ENCODE measurements at regions of chr4 and their contacts with region 1.

Region 1: DNA sequence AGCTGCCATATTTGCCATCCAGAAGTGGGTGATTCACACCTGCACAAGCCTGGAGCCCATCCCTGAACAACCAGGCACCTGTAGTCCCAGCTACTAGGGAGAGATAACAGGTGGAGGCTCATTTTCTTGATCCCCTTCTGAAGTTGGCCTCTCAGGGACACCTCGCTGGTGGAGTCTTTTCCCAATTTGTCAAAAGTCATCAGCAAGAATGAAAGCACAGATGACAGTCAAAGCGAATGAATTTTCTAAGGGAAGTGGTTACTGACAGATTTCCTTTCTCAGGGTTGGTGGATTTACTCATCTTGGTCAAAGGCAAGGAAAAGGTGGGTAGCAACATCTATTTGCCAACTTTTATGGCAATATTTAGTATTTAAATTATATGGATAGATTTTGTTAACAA is 36.5 kb downstream of the FGFBP1 start:
- DNase-seq: peak; percentile 30
- ATAC-seq: peak; percentile 77
- H3K4me3 Mint-ChIP-seq: no peak overlapping the region
- H3K27ac Mint-ChIP-seq: no peak overlapping the region
- H3K4me1 Mint-ChIP-seq: peaks cover 15% of the 10 kb centered on the region
- H3K27me3 Mint-ChIP-seq: peaks cover 38% of the 10 kb centered on the region

Region 2: DNA sequence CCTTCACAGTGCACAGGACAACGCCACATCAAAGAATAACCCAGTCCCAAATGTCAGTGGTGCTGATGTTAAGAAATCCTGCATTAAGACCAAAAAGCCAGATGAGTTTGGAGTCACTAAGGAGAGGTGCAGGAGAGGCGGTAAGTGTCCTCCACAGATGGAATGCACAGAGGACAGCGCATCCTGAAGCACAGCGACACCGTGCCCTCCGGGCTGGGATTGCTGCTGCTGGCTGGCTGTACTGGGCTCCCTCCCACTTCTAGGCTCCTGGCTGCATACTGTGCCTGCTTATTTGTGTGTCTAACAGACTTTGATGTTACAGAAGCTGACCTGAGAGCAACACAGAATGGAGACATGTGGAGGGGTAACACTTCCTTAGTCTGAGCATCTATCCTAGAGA is 1948.9 kb before region 1 on chr4:
- CTCF ChIA-PET with region 1: no interaction called
- POLR2A ChIA-PET with region 1: no interaction called
- intact Hi-C with region 1: no loop called
- DNase-seq: no peak
- ATAC-seq: no peak
- H3K4me3 Mint-ChIP-seq: no peak overlapping the region
- H3K27ac Mint-ChIP-seq: no peak overlapping the region
- H3K4me1 Mint-ChIP-seq: no peaks in the 10 kb centered on the region
- H3K27me3 Mint-ChIP-seq: peaks cover 2% of the 10 kb centered on the region

Region 3: DNA sequence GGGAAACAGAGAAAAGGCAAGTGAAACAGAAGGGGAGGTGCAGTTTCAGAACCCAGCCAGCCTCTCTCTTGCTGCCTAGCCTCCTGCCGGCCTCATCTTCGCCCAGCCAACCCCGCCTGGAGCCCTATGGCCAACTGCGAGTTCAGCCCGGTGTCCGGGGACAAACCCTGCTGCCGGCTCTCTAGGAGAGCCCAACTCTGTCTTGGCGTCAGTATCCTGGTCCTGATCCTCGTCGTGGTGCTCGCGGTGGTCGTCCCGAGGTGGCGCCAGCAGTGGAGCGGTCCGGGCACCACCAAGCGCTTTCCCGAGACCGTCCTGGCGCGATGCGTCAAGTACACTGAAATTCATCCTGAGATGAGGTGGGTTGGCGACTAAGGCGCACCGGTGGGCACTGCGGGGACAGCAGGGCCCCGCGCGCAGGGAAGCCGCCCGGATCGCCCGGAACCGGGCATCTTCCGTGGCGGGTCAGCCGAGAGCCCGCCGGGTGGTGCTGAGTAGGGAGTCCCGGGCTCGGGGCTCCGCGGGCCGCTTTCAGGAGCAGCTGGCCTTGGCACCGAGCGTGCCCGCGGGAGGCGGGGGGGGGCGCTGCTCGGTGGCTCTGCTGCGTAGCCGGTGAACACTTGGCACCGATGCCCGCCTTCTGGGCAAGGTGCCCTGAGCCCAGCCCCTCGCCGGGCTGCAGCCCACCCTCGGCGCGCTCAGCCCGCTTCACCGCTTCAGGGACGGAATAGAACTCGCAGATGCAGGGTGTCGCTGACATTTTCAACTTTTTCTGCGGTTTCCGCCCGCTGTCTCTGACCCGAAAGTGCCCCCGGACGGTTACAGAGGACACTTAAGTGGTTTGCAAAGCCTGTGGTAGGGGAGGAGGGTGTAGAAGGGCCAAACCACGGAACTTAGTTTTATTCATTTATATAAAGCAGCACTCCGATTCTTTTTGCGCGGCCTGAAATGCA is 123.4 kb before region 1 on chr4 and contains the start of gene CD38:
- CTCF ChIA-PET with region 1: no interaction called
- POLR2A ChIA-PET with region 1: no interaction called
- intact Hi-C with region 1: no loop called
- DNase-seq: peak; percentile 76
- ATAC-seq: peak; percentile 76
- H3K4me3 Mint-ChIP-seq: peak within 1 kb of the TSS; percentile 84
- H3K27ac Mint-ChIP-seq: peak within 1 kb of the TSS; percentile 86
- H3K4me1 Mint-ChIP-seq: peaks cover 70% of the 10 kb centered on the region
- H3K27me3 Mint-ChIP-seq: peaks cover 30% of the 10 kb centered on the region
- total RNA-seq, gene CD38: 15.0 to 17.3 TPM

Region 4: DNA sequence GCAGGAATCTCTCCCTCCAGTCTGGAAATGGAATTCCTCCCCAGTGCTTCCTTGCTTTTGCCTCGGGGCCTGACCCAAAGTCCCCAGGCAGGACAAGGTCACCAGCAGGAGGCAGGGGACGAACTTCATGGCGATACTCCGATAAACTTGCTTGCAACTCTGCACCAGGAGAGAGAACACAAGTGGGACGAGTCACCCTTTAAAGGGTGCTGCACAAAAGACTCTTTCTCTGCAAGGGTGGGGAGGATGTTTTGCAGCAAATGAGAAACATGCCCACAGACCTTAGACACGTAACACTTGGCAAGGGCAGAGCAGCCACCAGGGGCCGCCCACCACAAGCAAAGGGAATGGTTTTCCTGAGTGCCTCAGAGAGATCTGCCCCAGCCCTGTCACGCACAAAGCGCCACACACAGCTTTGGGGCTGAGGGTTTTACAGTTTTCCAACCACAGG is 61.0 kb after region 1 on chr4 and contains the start of gene FGFBP2:
- CTCF ChIA-PET with region 1: no interaction called
- POLR2A ChIA-PET with region 1: no interaction called
- intact Hi-C with region 1: loop called in 1 of 2 experiments (anchors 5 kb)
- DNase-seq: peak; percentile 85
- ATAC-seq: peak; percentile 85
- H3K4me3 Mint-ChIP-seq: peak within 1 kb of the TSS; percentile 13
- H3K27ac Mint-ChIP-seq: peak within 1 kb of the TSS; percentile 59
- H3K4me1 Mint-ChIP-seq: peaks cover 23% of the 10 kb centered on the region
- H3K27me3 Mint-ChIP-seq: peaks cover 2% of the 10 kb centered on the region
- total RNA-seq, gene FGFBP2: 2.5 to 3.2 TPM

Measured in activated CD4-positive, alpha-beta T cell treated with anti-CD3 and anti-CD28 coated beads for 36 hours (primary cell).